GM10248 (cell line): ENCODE measurements at regions of chr11 and their contacts with region 1.

Region 1: DNA sequence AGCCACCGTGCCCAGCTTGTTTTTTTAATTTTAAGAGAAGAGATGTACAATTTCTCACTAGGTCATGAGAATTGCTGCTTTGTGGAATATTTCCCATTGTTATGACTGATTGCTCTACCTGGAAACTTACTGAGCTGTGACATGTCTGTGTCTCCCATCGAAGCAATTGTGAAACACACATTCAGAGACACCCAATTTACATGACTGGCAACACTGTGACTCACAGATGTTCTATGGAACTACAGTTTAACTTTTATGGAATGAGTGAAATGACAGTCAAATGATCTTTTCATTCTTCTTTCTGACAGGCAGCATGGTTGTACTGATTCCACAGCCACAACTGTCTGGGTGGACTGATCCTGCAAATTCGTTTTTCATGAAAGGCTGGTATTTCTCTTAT is 32.3 kb downstream of the ELF5 start:
- DNase-seq: no peak
- CTCF ChIP-seq: no peak

Region 2: GRCh38 chr11:34454308-34455032 is 26.8 kb before region 1 on chr11:
- CTCF ChIA-PET with region 1: no interaction called
- POLR2A ChIA-PET with region 1: no interaction called
- DNase-seq: no peak
- CTCF ChIP-seq: no peak

Region 3: DNA sequence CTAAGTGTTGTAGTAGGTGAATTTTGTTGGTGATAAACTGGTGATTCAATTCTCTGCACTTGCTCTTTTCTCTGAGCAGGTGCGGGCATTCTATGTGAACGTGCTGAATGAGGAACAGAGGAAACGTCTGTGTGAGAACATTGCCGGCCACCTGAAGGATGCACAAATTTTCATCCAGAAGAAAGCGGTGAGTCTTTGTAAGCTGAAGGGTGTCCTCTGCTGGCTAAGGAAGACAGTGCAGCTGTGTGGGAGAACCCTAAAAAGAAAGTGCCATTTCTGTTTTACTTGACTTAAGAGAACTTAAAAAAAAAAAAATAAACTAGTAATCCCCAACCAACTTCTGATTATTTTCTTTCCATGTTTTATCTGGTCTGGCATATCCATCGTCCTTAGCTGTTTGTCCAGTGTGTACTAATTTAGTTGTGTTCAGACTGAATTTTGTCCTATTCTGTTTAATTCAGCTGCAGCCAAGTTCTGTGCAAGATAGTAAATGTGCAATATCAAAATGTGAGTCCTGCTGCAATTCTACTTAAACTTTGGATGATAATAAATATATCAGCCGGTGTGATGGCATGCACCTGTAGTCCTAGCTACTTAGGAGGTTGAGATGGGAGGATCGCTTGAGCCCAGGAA is 13.0 kb before region 1 on chr11:
- CTCF ChIA-PET with region 1: interaction called, 10 read pairs
- POLR2A ChIA-PET with region 1: no interaction called
- DNase-seq: peak; percentile 39
- CTCF ChIP-seq: peak; percentile 65

Region 4: GRCh38 chr11:34492806-34493414 is 11.6 kb after region 1 on chr11:
- CTCF ChIA-PET with region 1: interaction called, 10 read pairs
- POLR2A ChIA-PET with region 1: no interaction called
- DNase-seq: peak; percentile 63
- CTCF ChIP-seq: peak; percentile 82

Region 5: GRCh38 chr11:34565417-34566207 is 84.3 kb after region 1 on chr11:
- CTCF ChIA-PET with region 1: no interaction called
- POLR2A ChIA-PET with region 1: no interaction called
- DNase-seq: peak; percentile 35
- CTCF ChIP-seq: peak; percentile 46